IMR-90 (cell line): ENCODE measurements at regions of chr7 and their contacts with region 1.

Region 1: DNA sequence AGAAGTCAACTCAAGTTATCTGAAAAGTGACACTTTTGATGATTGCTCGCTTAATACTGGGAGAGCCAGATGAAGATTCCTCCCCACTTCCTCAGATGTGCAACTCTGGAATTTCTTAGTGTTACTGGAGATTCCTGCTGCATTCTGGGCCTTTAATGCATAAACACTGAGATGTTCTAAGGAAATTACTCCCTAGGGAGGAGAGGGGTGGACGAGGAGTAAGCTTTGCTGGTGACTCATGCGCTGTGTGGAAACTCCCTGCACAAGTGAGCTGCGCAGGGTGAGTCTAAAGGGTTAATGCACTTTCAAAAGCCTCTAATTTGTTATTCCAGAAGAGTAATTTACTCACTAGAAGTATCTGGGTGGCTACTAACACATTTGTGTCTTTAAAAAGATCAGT is 46.3 kb downstream of the EGFR start:
- DNase-seq: peak; percentile 99
- ATAC-seq: peak; percentile 76
- H3K4me3 ChIP-seq: no peak overlapping the region
- H3K27ac ChIP-seq: peak overlapping the region; percentile 93; the same call in 1 of the 2 replicates
- H3K4me1 ChIP-seq: peaks cover 45% of the 10 kb centered on the region
- H3K27me3 ChIP-seq: no peaks in the 10 kb centered on the region
- CTCF ChIP-seq: no peak
- POLR2A ChIP-seq: no peak; the same call in 1 of the 2 replicates
- RAD21 ChIP-seq: peak; percentile 33; the same call in 1 of the 2 replicates

Region 2: DNA sequence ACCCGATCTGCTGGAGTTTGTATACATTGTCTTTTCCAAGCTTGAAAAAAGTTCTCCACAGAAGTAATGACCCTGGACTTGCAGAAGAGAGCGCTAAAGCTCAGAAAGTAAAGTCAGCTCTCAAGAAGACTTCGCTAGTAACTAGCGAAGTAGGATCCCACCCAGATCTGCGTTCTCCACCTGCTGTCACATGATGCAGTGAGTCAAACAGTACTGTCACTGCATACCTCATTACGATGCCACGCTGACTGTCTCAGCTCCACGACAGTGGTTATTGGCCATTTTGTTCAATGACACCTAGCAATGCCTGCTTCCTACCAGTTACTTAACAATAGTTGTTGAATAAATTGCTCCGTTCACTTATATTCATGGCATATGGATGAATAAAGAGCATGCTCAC is 276.4 kb before region 1 on chr7:
- CTCF ChIA-PET with region 1: interaction called, 3 read pairs
- POLR2A ChIA-PET with region 1: no interaction called
- dilution Hi-C with region 1: no loop called
- in situ Hi-C with region 1: no loop called
- intact Hi-C with region 1: loop called (anchors 2 kb)
- DNase-seq: peak; percentile 96
- ATAC-seq: peak; percentile 98
- H3K4me3 ChIP-seq: no peak overlapping the region; the same call in 1 of the 2 replicates
- H3K27ac ChIP-seq: no peak overlapping the region
- H3K4me1 ChIP-seq: peaks cover 2% of the 10 kb centered on the region; the same call in 1 of the 2 replicates
- H3K27me3 ChIP-seq: no peaks in the 10 kb centered on the region
- CTCF ChIP-seq: peak; percentile 96
- POLR2A ChIP-seq: peak; percentile 46; the same call in 1 of the 2 replicates
- RAD21 ChIP-seq: peak; percentile 96

Region 3: DNA sequence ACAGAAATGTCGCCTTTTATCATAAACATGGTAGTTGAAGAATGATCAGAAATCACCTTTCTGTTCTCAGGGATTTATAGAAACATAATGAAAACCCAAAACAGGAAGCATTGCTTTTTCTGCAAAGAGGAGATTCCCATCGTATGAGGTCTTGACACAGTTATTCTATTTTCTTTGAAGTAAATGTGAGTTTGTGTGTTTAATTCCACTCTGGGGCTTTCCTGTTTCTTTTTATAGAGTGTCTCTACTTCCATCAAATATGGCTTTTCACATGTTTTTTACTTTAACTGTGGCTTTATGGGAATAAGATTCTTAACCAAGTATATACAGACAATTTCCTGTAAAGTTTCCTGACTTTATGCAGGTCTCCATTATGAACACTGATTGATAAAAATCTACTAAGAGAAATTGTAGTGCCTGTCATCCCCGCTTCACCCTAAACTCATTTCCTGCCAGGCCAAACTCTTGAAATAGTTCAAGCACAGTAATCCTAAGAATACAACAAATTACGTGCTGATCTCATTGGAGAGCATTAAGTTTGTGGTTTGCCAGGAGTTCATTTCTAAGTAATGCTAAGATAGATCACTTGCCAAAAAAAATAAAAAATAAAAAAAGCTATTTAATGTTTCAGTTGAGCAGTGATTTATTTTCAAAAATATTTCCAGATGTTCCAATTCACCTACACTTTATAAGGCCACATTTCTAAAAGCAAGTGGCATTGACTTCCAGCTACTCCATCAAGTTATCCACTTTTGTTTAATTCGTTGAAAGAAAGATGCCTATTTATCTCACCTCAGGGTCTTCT is 253.8 kb before region 1 on chr7:
- CTCF ChIA-PET with region 1: no interaction called
- POLR2A ChIA-PET with region 1: no interaction called
- dilution Hi-C with region 1: no loop called
- in situ Hi-C with region 1: no loop called
- intact Hi-C with region 1: loop called (anchors 1 kb)
- DNase-seq: peak; percentile 94
- ATAC-seq: peak; percentile 77
- H3K4me3 ChIP-seq: no peak overlapping the region
- H3K27ac ChIP-seq: peak overlapping the region; percentile 96
- H3K4me1 ChIP-seq: peaks cover 16% of the 10 kb centered on the region
- H3K27me3 ChIP-seq: no peaks in the 10 kb centered on the region
- CTCF ChIP-seq: no peak
- POLR2A ChIP-seq: no peak
- RAD21 ChIP-seq: no peak

Region 4: DNA sequence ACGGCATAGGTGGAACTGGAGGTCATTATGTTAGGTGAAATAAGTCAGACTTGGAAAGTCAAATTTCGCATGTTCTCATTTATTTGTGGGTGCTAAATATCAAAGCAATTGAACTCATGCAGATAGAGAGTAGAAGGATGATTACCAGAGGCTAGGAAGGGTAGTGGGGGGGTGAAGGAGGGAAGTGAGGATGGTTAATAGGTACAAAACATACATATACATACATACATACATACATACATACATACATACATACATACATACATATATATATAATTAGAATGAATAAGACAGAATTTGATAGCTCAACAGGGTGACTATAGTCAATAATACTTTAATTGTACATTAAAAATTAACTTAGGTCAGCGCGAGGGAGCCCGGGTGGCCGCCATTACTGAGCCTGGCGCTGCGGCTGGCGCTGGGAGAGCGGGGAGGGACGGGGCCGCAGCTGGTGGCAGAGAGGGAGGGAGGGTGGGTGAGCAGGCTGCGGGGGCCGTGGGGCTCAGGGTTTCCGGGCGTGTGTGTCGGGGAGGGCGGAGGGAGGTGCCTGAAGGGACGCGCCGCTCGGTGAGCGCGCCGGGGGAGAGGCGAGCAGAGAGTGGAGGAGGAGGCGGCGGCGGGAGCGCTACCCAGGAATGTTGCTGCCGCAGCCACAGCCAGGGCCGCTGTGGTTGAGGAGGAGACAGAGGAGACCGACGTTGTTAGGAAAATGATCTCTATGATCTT is 132.1 kb before region 1 on chr7:
- CTCF ChIA-PET with region 1: no interaction called
- POLR2A ChIA-PET with region 1: no interaction called
- dilution Hi-C with region 1: no loop called
- in situ Hi-C with region 1: no loop called
- intact Hi-C with region 1: no loop called
- DNase-seq: peak; percentile 66
- ATAC-seq: peak; percentile 100
- H3K4me3 ChIP-seq: peak overlapping the region; percentile 42
- H3K27ac ChIP-seq: peak overlapping the region; percentile 75
- H3K4me1 ChIP-seq: peaks cover 2% of the 10 kb centered on the region; the same call in 1 of the 2 replicates
- H3K27me3 ChIP-seq: no peaks in the 10 kb centered on the region
- CTCF ChIP-seq: no peak
- POLR2A ChIP-seq: no peak
- RAD21 ChIP-seq: no peak

Region 5: GRCh38 chr7:55026866-55027490 is 38.1 kb before region 1 on chr7:
- CTCF ChIA-PET with region 1: no interaction called
- POLR2A ChIA-PET with region 1: no interaction called
- dilution Hi-C with region 1: no loop called
- in situ Hi-C with region 1: no loop called
- intact Hi-C with region 1: loop called (anchors 5 kb)
- DNase-seq: peak; percentile 48
- ATAC-seq: 0 out of 2 replicates have a peak, but pooled peaks have one; percentile 28
- H3K4me3 ChIP-seq: no peak overlapping the region
- H3K27ac ChIP-seq: peak overlapping the region; percentile 4; the same call in 1 of the 2 replicates
- H3K4me1 ChIP-seq: peaks cover 34% of the 10 kb centered on the region
- H3K27me3 ChIP-seq: no peaks in the 10 kb centered on the region
- CTCF ChIP-seq: no peak
- POLR2A ChIP-seq: no peak
- RAD21 ChIP-seq: no peak

Region 6: DNA sequence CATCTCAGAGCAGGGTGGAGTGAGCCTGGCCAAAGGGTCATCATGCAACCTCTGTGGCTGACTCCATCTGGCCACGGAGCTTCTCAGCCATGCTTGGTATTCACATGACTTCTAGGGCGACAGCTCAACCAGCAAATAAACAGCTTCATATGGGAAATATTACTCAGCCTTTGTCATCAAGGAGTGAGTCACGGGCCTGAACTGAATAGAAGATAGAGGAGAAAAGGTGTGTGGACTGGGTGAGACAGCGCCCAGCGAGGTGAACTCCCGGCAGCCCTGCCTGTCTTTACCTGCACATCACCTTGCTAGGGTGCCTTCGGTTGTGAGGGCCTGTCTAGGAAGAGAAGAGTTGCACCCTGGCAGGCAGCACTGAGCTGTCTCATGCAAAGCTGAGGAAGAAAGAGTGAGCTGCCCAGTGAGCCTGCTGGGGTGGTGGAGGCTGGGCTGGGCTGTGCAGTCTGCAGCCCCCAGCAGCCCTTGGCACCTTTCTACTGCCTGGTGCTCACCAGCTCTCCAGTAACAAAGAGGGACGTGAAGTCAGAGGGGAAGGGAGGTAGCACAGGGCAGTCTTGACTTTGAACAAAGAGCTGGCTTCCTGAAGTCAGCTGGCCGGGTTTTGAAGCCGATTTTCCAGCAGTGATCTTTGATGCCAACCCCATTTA is 67.9 kb after region 1 on chr7:
- CTCF ChIA-PET with region 1: interaction called, 7 read pairs
- POLR2A ChIA-PET with region 1: interaction called, 3 read pairs
- dilution Hi-C with region 1: no loop called
- in situ Hi-C with region 1: no loop called
- intact Hi-C with region 1: loop called (anchors 1 kb)
- DNase-seq: peak; percentile 100
- ATAC-seq: peak; percentile 72
- H3K4me3 ChIP-seq: no peak overlapping the region
- H3K27ac ChIP-seq: peak overlapping the region; percentile 94
- H3K4me1 ChIP-seq: peaks cover 44% of the 10 kb centered on the region
- H3K27me3 ChIP-seq: no peaks in the 10 kb centered on the region
- CTCF ChIP-seq: no peak
- POLR2A ChIP-seq: peak; percentile 43
- RAD21 ChIP-seq: peak; percentile 26; the same call in 1 of the 2 replicates